Activated CD4-positive, alpha-beta T cell treated with anti-CD3 and anti-CD28 coated beads, Interleukin-2, amount 10 ng/mL, durations not matched to agents 24 days and 14 days (primary cell): ENCODE measurements at regions of chr14 and their contacts with region 1.

Region 1: DNA sequence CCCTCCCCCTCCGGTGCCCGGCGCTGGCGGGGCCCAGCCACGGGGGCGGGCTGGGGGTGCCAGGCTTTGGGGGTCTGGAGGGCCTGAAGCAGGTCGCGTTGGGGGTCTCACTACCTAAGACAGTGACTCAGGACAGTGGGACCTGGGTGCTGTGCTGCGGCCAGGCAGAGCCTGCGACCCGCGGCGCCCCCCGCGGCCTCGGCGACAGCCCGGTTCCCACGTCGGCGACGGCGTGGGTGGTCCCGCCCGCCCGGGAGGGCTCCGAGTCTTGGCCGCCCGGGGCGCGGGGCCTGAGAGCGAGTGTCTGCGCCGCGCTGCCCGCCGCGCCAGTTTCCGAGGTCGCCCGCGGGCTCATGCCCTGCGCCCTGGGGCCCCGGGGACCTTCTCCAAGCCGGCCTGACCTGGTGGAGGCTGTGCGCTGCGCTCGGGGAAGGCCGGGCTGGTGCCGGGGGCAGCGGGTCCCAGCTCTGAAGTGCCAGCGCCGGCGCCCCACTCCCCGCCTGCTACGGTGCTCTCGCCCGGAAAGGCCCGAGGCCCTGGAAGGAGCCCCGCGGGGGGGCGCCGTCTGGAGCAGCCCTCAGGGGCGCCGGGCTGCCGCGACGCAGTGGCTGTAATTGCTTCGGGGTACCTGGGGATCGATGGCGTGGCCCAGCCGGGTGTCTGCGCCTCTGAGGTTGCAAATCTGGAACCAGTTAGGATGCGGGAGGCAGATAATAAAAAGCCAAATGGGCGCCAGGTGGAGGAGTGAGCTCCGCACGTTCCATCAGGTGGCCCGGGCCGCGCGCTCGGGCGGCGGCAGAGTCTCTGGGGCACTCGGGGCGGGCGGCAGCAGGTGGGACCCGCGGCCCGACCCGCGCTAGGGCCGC is 102.5 kb upstream of the DIO3 start:
- DNase-seq: no peak
- H3K4me3 Mint-ChIP-seq: no peak overlapping the region
- H3K27ac Mint-ChIP-seq: no peak overlapping the region
- H3K4me1 Mint-ChIP-seq: no peaks in the 10 kb centered on the region
- H3K27me3 Mint-ChIP-seq: peaks cover 52% of the 10 kb centered on the region

Region 2: GRCh38 chr14:101257551-101257950 is 201.2 kb before region 1 on chr14:
- intact Hi-C with region 1: no loop called
- DNase-seq: peak; percentile 45
- H3K4me3 Mint-ChIP-seq: no peak overlapping the region
- H3K27ac Mint-ChIP-seq: no peak overlapping the region
- H3K4me1 Mint-ChIP-seq: no peaks in the 10 kb centered on the region
- H3K27me3 Mint-ChIP-seq: peaks cover 5% of the 10 kb centered on the region

Region 3: DNA sequence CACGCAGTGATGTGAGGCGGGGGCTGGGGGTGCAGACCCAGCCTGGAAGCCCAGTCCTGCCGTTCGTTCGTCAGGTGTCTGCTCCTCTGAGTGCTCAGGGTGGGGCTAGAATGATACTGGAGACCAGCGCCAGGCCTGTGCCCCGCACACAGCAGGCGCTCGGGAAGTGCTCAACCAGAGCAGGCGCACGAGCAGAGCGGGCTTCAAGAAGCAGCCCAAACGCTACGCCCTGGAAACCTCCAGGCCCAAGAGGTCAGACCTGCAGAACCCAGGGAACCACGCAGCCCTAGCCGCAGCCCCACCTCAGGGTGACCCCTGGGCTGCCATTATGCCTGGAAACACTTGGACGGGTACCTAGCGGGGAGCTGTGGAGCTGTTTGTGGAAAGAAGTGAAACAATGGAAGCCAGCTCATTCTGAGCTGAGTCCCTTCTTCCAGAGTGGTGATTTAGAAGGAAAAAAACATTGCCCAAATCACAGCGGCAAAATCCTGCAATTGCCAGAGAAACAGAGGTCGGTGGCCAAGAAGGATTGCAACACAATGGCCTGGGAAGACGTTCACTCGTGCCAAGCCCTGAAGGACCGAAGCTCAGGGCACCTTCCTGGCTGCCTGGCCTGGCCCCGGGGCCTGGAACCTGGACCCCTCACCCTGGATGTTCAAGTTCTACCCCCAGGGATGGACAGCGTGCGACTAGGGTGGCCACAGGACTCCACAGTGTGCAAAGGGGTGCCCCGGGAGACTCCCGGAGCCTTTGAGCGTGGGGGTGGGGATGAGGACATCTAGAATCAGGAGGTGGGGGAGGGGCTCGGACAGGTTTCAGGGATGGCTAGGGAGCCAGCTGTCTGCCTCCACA is 62.1 kb after region 1 on chr14:
- intact Hi-C with region 1: no loop called
- DNase-seq: no peak
- H3K4me3 Mint-ChIP-seq: no peak overlapping the region
- H3K27ac Mint-ChIP-seq: no peak overlapping the region
- H3K4me1 Mint-ChIP-seq: no peaks in the 10 kb centered on the region
- H3K27me3 Mint-ChIP-seq: no peaks in the 10 kb centered on the region

Region 4: GRCh38 chr14:101559624-101560533 is 101.1 kb after region 1 on chr14:
- intact Hi-C with region 1: loop called (anchors 5 kb)
- DNase-seq: no peak
- H3K4me3 Mint-ChIP-seq: no peak overlapping the region
- H3K27ac Mint-ChIP-seq: no peak overlapping the region
- H3K4me1 Mint-ChIP-seq: no peaks in the 10 kb centered on the region
- H3K27me3 Mint-ChIP-seq: peaks cover 41% of the 10 kb centered on the region